IMR-90 (cell line): ENCODE measurements at regions of chr10 and their contacts with region 1.

Region 1: GRCh38 chr10:31261511-31262311 is 57.3 kb upstream of the ZEB1 start:
- DNase-seq: peak; percentile 94
- ATAC-seq: peak; percentile 83
- H3K4me3 ChIP-seq: no peak overlapping the region; the same call in 1 of the 2 replicates
- H3K27ac ChIP-seq: peak overlapping the region; percentile 88
- H3K4me1 ChIP-seq: peaks cover 21% of the 10 kb centered on the region
- H3K27me3 ChIP-seq: no peaks in the 10 kb centered on the region
- CTCF ChIP-seq: no peak
- POLR2A ChIP-seq: no peak
- RAD21 ChIP-seq: no peak; the same call in 1 of the 2 replicates

Region 2: GRCh38 chr10:30915146-30915545 is 346.6 kb before region 1 on chr10:
- CTCF ChIA-PET with region 1: no interaction called
- POLR2A ChIA-PET with region 1: no interaction called
- dilution Hi-C with region 1: no loop called
- in situ Hi-C with region 1: no loop called
- intact Hi-C with region 1: no loop called
- DNase-seq: peak; percentile 65
- ATAC-seq: no peak; the same call in none of the 2 replicates
- H3K4me3 ChIP-seq: no peak overlapping the region
- H3K27ac ChIP-seq: no peak overlapping the region
- H3K4me1 ChIP-seq: peaks cover 4% of the 10 kb centered on the region; the same call in 1 of the 2 replicates
- H3K27me3 ChIP-seq: no peaks in the 10 kb centered on the region
- CTCF ChIP-seq: no peak
- POLR2A ChIP-seq: no peak
- RAD21 ChIP-seq: no peak

Region 3: GRCh38 chr10:31071232-31072005 is 190.3 kb before region 1 on chr10:
- CTCF ChIA-PET with region 1: no interaction called
- POLR2A ChIA-PET with region 1: no interaction called
- dilution Hi-C with region 1: no loop called
- in situ Hi-C with region 1: no loop called
- intact Hi-C with region 1: loop called (anchors 5 kb)
- DNase-seq: peak; percentile 62
- ATAC-seq: peak; percentile 45; the same call in 1 of the 2 replicates
- H3K4me3 ChIP-seq: no peak overlapping the region
- H3K27ac ChIP-seq: no peak overlapping the region
- H3K4me1 ChIP-seq: peaks cover 16% of the 10 kb centered on the region
- H3K27me3 ChIP-seq: no peaks in the 10 kb centered on the region
- CTCF ChIP-seq: no peak
- POLR2A ChIP-seq: no peak
- RAD21 ChIP-seq: no peak